Lower leg skin (tissue), 4 donors: ENCODE measurements at regions of chr3 and their contacts with region 1.

Region 1: DNA sequence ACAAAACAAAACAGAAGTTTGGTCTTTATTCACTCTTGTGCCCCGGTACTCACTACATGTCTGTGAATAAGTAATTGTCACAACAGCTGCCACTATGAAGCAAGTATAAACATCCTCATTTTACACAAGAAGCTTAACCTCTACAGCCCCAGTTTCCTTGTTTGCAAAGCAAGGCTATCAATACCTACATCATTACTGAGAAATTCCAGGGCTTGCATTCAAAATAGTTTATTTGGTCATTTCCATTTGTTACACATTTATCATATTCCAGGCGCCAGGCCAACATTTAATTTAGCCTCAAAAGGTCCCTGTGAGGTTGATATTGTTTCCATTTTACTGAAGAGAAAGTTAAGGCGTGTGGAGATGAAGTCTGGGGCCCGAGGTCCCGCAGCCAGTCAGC is 161.4 kb upstream of the LRTM1 start:
- DNase-seq: no peak
- H3K4me3 ChIP-seq: no peak overlapping the region
- CTCF ChIP-seq: no peak
- POLR2A ChIP-seq: no peak

Region 2: DNA sequence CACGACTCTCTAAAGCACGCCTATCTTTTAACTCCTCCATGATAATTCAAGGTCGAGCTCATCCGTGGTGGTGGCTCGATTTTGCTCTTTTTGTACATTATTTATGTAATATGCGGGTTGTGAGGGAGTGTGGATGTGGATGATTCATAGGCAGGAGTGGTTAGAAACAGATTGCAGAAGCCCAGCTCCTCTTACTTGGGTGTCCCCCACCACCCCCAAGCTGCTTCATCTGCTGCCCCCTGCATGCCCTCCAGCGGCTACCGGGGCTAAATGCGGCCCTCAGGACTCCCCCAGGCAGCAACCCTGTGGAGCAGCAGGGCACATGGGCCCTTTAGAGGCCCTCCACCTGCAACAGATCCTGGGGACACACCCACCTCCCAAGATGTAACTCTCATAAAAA is 1086.1 kb before region 1 on chr3:
- intact Hi-C with region 1: loop called (anchors 5 kb)
- DNase-seq: no peak
- H3K4me3 ChIP-seq: no peak overlapping the region
- CTCF ChIP-seq: no peak
- POLR2A ChIP-seq: no peak